Naive thymus-derived CD4-positive, alpha-beta T cell (primary cell): ENCODE measurements at regions of chr18 and their contacts with region 1.

Region 1: DNA sequence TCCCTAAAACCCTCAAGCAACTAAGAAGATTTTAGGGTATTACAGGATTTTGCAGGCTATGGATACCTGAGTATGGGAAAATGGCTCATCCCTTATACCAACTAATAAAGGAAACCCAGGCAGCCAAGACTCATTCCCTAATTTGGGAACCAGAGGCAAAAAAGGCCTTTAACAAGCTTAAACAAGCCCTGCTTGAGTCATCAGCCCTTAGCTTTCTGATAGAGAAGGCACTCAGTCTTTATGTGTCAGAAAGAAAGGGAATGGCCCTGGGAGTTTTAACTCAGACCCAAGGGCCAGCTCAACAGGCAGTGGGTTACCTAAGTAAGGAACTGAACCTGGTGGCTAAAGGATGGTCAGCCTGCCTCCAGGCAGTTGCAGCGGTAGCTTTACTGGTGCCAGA is 96.9 kb upstream of the RMP24 start:
- DNase-seq: no peak
- ATAC-seq: no peak
- H3K4me3 ChIP-seq: no peak overlapping the region
- H3K4me3 Mint-ChIP-seq: no peak overlapping the region
- H3K27ac ChIP-seq: no peak overlapping the region
- H3K27ac Mint-ChIP-seq: no peak overlapping the region
- H3K4me1 ChIP-seq: no peaks in the 10 kb centered on the region
- H3K4me1 Mint-ChIP-seq: no peaks in the 10 kb centered on the region
- H3K27me3 ChIP-seq: no peaks in the 10 kb centered on the region
- H3K27me3 Mint-ChIP-seq: peaks cover 5 to 20% (median 12%) of the 10 kb centered on the region in 5 donors

Region 2: GRCh38 chr18:34947711-34948125 is 927.8 kb before region 1 on chr18:
- CTCF ChIA-PET with region 1: no interaction called
- POLR2A ChIA-PET with region 1: no interaction called
- intact Hi-C with region 1: no loop called
- DNase-seq: no peak
- ATAC-seq: no peak
- H3K4me3 ChIP-seq: no peak overlapping the region
- H3K4me3 Mint-ChIP-seq: no peak overlapping the region
- H3K27ac ChIP-seq: no peak overlapping the region
- H3K27ac Mint-ChIP-seq: peak overlapping the region in 1 of 9 donors; percentile 31
- H3K4me1 ChIP-seq: no peaks in the 10 kb centered on the region
- H3K4me1 Mint-ChIP-seq: no peaks in the 10 kb centered on the region
- H3K27me3 ChIP-seq: no peaks in the 10 kb centered on the region
- H3K27me3 Mint-ChIP-seq: peaks cover 5 to 15% (median 8%) of the 10 kb centered on the region in 5 donors

Region 3: GRCh38 chr18:35854095-35854494 is 21.5 kb before region 1 on chr18:
- CTCF ChIA-PET with region 1: no interaction called
- POLR2A ChIA-PET with region 1: no interaction called
- intact Hi-C with region 1: loop called in 1 of 2 experiments (anchors 2 kb)
- DNase-seq: no peak
- ATAC-seq: no peak
- H3K4me3 ChIP-seq: no peak overlapping the region
- H3K4me3 Mint-ChIP-seq: no peak overlapping the region
- H3K27ac ChIP-seq: no peak overlapping the region
- H3K27ac Mint-ChIP-seq: no peak overlapping the region
- H3K4me1 ChIP-seq: no peaks in the 10 kb centered on the region
- H3K4me1 Mint-ChIP-seq: no peaks in the 10 kb centered on the region
- H3K27me3 ChIP-seq: no peaks in the 10 kb centered on the region
- H3K27me3 Mint-ChIP-seq: peaks cover 0 to 14% (median 8%) of the 10 kb centered on the region in 5 donors